Left ventricle myocardium superior (tissue), 1 donor: ENCODE measurements at regions of chrX and their contacts with region 1.

Region 1: DNA sequence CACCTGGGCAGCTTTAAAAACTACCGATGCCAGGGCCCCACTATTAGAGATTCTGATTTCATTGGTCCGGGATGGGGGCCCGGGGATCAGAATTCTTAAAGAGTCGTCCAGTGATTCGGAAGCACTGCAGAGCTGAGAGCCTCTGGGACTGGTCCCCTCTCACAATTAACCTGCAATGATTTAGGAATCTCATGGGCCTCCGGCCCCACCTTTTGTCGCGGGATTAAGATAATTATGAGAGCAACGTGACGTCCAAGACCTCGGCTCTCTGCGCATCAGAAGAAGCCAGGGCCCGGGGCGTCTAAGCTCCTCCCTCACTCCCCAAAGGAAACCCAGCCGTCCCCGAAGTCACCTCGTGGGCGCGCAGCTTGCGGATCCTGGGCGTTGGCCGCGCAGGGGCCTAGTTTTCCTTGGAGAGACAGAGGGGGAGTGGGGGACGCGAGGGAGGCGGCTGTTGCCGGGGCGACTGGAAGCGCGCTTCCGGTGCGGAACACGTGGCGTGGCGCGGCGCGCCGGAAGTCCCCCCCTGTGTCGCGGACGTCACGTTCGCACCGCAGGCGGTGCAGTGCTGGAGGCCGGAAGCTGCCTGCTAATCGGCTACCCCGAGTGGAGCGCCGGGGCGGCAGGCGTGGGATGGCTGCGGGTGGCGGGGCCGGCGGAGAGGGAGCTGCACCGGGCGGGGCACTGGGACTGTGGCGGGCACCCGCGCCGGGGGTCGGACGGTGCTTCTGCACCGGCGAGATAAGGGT is at the start of gene GEMIN8:
- DNase-seq: peak; percentile 92
- ATAC-seq: peak; percentile 99
- total RNA-seq, gene GEMIN8: 8.3 TPM

Region 2: GRCh38 chrX:13506574-13506973 is 523.0 kb before region 1 on chrX:
- intact Hi-C with region 1: loop called (anchors 5 kb)
- DNase-seq: peak; percentile 39
- ATAC-seq: no peak

Region 3: DNA sequence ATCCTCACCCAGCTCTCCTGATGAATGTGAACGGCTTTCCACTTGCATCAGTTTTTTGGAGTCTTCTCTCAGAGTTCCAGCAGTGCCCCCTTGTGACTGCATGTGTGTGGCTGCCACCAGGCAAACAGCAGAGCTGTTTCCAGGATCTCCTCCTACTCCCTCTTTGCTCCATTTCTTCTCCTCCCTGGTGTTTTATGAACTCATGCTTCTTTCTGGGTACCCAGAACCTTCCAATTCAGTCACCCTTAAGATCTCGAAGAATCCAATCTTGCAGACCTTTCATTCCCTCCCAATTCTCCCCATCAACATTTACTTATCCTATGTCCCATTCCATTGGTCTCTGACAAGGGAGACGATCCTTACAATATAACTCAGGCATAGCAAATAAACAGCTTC is 383.4 kb before region 1 on chrX:
- intact Hi-C with region 1: loop called (anchors 5 kb)
- DNase-seq: peak; percentile 57
- ATAC-seq: peak; percentile 72